ENCODE measurements at regions of chr10 and their contacts with region 1.

Region 1: DNA sequence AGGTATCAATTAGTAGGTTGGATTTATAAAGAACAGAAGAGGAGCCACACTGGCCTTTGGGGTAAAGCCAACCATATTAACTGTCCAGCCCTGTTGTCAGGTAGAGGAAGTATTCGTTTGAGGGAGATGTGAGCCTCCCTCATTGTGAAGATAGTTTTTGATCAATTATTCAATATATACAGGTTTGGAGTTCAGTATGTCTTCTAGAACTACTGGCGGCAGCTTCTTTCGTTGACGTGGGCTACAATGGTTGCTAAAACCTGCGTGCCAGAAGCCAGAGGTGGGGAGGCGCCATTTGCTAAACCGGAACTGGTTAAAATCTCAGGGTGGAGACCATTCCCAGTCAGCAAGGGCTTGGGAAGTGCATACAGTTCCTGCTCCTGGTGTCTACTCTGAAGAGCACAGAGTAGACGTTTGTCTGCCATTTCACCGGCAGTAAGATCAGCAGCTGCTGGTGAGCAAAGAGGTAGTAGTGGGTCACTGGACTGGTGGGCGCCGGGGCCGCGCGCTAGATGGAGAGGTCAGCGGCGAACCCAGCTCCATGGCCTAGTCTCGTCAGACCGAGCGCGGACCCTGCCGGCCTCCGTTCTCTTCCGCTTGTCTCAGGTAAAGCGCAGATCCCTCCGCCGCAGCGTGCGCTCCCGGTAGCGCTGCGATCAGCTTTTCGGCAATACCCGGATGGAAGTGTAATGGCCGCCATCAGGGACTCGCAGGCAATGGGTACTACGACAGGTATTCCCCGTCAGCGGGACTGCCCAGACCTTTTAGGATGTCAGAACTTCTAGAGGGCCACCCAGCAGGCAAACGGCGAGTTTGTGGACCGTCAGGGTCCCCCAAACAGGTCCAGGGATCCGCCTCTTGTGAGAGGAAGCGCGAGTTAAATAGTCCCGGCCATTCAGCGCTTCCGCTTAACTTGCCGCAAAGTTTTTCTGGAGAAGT is at the start of gene ZNF518A:
- DNase-seq: peak; percentile 94
- H3K4me3 ChIP-seq: peak within 1 kb of the TSS; percentile 66
- H3K27ac ChIP-seq: peak within 1 kb of the TSS; percentile 94
- H3K4me1 ChIP-seq: no peaks in the 10 kb centered on the region
- H3K27me3 ChIP-seq: no peaks in the 10 kb centered on the region
- CTCF ChIP-seq: no peak
- total RNA-seq, gene ZNF518A: 28.5 to 29.4 TPM

Region 2: GRCh38 chr10:96038476-96039387 is 90.9 kb before region 1 on chr10:
- intact Hi-C with region 1: loop called (anchors 10 kb)
- DNase-seq: no peak
- H3K4me3 ChIP-seq: no peak overlapping the region
- H3K27ac ChIP-seq: no peak overlapping the region
- H3K4me1 ChIP-seq: no peaks in the 10 kb centered on the region
- H3K27me3 ChIP-seq: no peaks in the 10 kb centered on the region
- CTCF ChIP-seq: no peak

Region 3: GRCh38 chr10:96089670-96090462 is 39.8 kb before region 1 on chr10:
- intact Hi-C with region 1: loop called (anchors 5 kb)
- DNase-seq: peak; percentile 92
- H3K4me3 ChIP-seq: peak overlapping the region; percentile 47
- H3K27ac ChIP-seq: peak overlapping the region; percentile 94
- H3K4me1 ChIP-seq: peaks cover 3% of the 10 kb centered on the region
- H3K27me3 ChIP-seq: no peaks in the 10 kb centered on the region
- CTCF ChIP-seq: no peak

Measured in colonic mucosa (tissue), 4 donors.